ENCODE measurements at regions of chr3 and their contacts with region 1.

Region 1: DNA sequence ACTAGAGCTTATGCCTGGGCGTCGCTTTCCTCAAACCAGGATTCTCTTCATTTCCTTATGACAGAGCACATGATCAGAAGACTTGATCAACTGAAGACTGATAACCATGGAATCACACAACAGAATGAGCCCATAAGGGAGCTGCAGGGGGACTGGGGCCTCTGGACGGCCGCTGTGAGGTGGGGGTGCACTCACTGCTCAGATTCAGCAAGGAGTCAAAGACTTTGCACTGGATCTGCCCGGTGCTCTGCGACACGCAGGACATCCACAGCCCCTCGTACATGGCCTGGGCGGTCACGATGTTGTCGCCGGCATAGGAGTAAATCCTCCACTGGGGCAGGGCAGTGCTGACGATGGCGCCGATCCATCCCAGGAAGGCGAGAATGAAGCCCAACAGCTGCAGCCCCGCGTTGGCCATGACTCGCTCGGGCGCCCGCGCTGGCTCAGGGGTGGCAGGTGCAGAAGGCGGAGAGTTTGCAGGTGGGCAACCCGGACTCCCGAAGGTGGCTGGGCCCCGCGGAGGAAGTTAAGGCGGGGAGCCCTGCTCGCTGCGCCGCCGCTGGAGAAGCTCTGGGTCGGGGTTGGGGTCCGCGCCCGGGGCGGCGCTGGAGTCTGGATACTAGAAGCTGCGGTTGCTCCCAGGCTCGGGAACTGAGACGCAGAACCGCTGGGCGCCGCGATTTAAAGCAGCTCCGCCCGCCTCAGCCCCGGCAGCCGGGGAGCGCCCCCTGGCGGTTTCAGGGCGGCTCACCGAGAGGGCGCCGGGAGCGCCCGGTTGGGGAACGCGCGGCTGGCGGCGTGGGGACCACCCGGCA is at the start of gene CLDN1:
- DNase-seq: peak; percentile 80 to 90 (median 90)
- H3K4me3 ChIP-seq: peak within 1 kb of the TSS in 3 of 4 donors; percentile 66 to 96 (median 90)
- H3K27ac ChIP-seq: peak within 1 kb of the TSS; percentile 37 to 93 (median 74)
- H3K4me1 ChIP-seq: peaks cover 19 to 32% of the 10 kb centered on the region in 2 donors
- H3K27me3 ChIP-seq: no peaks in the 10 kb centered on the region
- CTCF ChIP-seq: peak; percentile 79 to 98 (median 95)
- POLR2A ChIP-seq: peak; percentile 57 to 93
- total RNA-seq, gene CLDN1: 15.6 to 155 (median 64.6) TPM

Region 2: DNA sequence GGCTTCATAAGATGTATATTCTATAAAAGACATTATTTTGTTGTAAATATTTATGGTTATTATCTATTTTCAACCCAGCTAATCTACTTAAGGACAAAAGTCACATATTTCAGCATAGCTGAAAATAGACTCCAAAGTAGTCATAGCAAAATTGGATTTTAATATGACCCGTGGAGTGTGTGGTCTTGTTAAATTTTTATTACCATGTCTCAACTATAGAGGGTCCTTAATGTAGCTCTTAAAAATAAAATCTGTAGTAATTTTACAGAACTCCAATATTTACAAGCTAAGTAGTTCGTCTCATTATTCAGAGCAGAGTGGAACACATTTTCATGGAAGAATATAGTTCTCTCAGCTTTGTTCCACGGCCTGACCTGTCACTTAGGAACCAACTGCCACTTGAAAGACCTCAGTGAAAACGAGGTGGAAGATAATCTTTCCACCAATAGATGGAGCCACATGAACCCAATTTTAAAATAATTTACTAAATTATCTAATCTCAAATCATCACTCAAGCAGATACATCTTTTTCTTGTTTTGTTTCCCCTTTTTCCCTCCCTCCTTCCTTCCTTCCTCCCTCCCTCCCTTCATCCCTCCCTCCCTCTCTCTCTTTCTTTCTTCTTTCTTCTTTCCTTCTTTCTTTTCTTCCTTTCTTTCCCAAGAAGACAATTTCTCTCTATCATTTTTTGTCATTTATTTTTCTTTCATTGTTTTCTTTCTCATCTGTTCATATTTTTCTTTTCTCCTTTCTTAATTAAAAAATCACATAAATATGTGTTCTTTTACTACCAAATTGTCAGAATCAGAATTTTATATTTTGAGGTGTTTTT is 96.9 kb before region 1 on chr3:
- intact Hi-C with region 1: loop called (anchors 2 to 5 kb)
- DNase-seq: peak in 1 of 7 donors; percentile 40
- H3K4me3 ChIP-seq: no peak overlapping the region
- H3K27ac ChIP-seq: no peak overlapping the region
- H3K4me1 ChIP-seq: no peaks in the 10 kb centered on the region
- H3K27me3 ChIP-seq: no peaks in the 10 kb centered on the region
- CTCF ChIP-seq: peak; percentile 34 to 79 (median 56)
- POLR2A ChIP-seq: no peak

Region 3: DNA sequence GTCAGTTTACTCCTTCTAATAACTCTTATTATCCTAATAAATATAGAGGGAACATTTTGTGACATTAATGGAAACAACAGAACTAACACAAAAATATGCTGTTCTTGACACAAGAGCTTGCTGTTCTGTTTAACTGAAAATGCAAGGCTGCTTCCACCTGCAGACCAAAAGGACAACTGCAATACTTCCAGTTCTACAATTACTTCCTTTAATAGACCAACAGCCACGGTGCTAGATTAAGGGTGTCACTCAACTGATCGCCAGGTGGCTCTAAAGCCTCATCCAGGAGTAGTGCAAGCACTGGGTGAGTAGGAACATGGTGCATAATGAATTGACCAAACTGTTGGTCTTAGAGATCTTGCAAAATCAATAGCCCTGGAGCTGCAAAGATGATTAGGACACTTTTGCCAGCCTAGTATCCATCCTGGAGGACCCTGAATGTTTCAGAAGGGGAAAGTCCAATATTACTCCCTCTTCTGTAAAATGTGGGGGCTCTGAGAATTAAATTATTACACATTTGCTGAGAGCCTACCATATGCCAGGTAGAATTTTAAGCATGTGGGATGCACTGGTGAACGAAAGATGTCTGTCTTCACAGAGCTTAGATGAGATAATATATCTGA is 62.4 kb after region 1 on chr3:
- intact Hi-C with region 1: loop called in 1 of 2 experiments (anchors 10 kb)
- DNase-seq: peak; percentile 36 to 64 (median 43)
- H3K4me3 ChIP-seq: no peak overlapping the region
- H3K27ac ChIP-seq: no peak overlapping the region
- H3K4me1 ChIP-seq: peaks cover 0 to 3% of the 10 kb centered on the region in 2 donors
- H3K27me3 ChIP-seq: no peaks in the 10 kb centered on the region
- CTCF ChIP-seq: peak; percentile 38 to 76 (median 68)
- POLR2A ChIP-seq: no peak

Region 4: DNA sequence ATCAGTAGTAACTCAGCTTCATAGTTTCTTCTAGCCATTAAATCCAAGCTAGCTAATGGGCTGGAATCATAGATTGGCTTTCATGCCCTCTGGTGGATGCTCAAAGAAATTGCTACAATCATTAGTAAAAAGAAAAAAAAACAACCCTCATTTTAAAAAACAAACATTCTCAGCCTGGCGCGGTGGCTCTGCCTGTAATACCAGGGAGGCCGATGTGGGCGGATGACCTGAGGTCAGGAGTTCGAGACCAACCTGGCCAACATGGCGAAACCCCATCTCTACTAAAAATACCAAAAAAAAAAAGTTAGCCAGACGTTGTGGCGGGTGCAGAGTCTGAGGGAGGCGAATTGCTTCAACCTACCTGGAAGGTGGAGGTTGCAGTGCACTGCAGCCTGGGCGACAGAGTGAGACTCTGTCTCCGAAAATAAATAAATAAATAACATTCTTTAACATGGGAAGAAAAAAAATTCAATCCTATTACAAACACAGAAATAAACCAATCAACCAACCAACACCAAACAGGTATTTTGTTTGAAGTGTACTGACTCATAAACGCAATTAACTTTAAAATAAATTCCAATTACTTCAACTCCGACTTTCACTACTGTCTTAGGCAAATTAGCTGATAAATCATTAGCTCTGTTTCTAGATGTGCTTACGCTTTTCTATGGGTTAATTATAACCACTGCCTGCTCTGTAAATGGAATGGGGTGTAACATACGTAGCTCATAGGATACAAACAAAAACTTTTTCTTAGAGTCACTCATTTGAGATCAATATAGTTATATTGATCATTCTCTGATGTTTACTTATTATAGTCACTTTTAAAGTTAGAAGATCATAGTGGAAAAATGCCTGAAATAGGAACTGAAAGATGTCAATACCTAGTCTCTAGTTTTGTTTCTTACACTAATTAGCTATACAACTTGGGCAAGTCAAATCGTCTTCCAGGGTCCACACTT is 102.8 kb after region 1 on chr3:
- intact Hi-C with region 1: loop called in 1 of 2 experiments (anchors 10 kb)
- DNase-seq: peak; percentile 63 to 80 (median 73)
- H3K4me3 ChIP-seq: no peak overlapping the region
- H3K27ac ChIP-seq: no peak overlapping the region
- H3K4me1 ChIP-seq: no peaks in the 10 kb centered on the region
- H3K27me3 ChIP-seq: no peaks in the 10 kb centered on the region
- CTCF ChIP-seq: peak; percentile 57 to 91 (median 70)
- POLR2A ChIP-seq: no peak

Measured in adrenal gland (tissue), 19 donors.